ENCODE measurements at regions of chr12 and their contacts with region 1.

Region 1: GRCh38 chr12:12356886-12357718 is at the start of gene BORCS5:
- DNase-seq: peak; percentile 99
- H3K4me3 Mint-ChIP-seq: peak within 1 kb of the TSS; percentile 87
- H3K27ac Mint-ChIP-seq: peak within 1 kb of the TSS; percentile 93
- H3K4me1 Mint-ChIP-seq: peaks cover 51% of the 10 kb centered on the region
- H3K27me3 Mint-ChIP-seq: no peaks in the 10 kb centered on the region
- total RNA-seq, gene BORCS5: 30.9 to 32.4 TPM

Region 2: GRCh38 chr12:11648831-11649702 is 708.0 kb before region 1 on chr12 and contains the start of gene ETV6:
- CTCF ChIA-PET with region 1: interaction called, 3 read pairs
- POLR2A ChIA-PET with region 1: interaction called, 18 read pairs
- DNase-seq: peak; percentile 77
- H3K4me3 Mint-ChIP-seq: peak within 1 kb of the TSS; percentile 95
- H3K27ac Mint-ChIP-seq: peak within 1 kb of the TSS; percentile 96
- H3K4me1 Mint-ChIP-seq: peaks cover 28% of the 10 kb centered on the region
- H3K27me3 Mint-ChIP-seq: no peaks in the 10 kb centered on the region
- total RNA-seq, gene ETV6: 53.7 to 54.9 TPM

Region 3: DNA sequence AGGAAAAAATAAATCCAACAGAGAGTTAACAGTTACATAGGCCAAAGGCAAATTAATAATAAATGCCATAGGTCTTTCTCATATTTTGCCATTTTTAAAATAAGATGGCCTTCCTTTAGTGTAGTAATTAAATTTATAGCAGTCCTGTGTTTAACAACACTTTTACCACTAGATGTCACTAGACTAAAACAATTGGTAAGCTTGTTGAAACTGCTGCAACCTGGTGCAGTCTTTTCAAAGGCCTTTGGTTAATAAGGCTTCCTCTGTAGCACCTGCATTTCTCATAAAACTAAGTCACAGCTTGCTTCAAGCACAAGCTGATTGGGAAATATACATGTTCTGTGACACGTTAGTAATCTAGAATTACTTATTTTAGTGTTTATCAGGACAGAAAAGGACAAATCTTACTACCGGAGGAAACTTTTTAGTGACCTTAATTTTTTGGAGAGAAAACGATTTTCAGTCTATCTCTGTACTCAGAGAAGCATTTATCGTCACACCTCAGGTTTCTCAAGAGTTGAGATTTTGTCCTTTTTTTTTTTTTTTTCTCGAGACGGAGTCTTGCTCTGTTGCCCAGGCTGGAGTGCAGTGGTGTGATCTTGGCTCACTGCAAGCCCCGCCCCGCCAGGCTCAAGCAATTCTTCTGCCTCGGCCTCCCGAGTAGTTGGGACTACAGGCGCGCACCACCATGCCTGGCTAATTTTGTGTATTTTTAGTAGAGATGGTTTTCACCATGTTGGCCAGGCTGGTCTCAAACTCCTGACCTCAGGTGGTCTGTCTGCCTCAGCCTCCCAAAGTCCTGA is 19.7 kb after region 1 on chr12:
- CTCF ChIA-PET with region 1: interaction called, 31 read pairs
- POLR2A ChIA-PET with region 1: interaction called, 68 read pairs
- DNase-seq: no peak
- H3K4me3 Mint-ChIP-seq: no peak overlapping the region
- H3K27ac Mint-ChIP-seq: peak overlapping the region; percentile 65
- H3K4me1 Mint-ChIP-seq: peaks cover 60% of the 10 kb centered on the region
- H3K27me3 Mint-ChIP-seq: no peaks in the 10 kb centered on the region

Region 4: GRCh38 chr12:12456637-12457036 is 99.5 kb after region 1 on chr12:
- CTCF ChIA-PET with region 1: no interaction called
- POLR2A ChIA-PET with region 1: interaction called, 14 read pairs
- DNase-seq: no peak
- H3K4me3 Mint-ChIP-seq: peak overlapping the region; percentile 46
- H3K27ac Mint-ChIP-seq: peak overlapping the region; percentile 84
- H3K4me1 Mint-ChIP-seq: peaks cover 61% of the 10 kb centered on the region
- H3K27me3 Mint-ChIP-seq: no peaks in the 10 kb centered on the region

Region 5: DNA sequence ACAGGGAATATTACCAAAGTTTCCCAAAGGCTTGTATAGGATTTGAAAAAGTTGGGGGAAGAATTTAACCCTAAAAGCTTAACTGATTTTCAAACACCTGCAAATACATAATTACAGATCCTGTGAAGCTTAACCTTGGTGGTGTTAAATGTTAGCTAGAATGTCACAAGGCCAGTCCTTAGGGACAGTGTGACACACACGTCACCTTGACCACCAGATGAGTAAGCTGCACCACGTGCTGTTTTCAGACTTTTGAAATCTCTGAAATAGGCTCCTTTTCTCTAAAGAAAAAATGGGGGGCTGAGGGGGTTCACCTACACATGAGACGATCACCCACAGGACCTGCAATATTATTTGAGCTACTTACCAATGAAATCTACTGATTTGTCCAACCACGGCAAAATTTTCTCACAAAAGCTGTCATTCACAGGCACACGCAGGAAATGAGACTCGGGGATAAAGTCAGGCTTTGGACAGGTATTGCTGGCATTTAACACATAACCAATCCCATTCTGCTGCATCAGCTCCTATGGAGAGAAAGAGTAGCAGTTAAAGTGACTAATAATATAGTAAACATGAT is 129.6 kb after region 1 on chr12:
- CTCF ChIA-PET with region 1: no interaction called
- POLR2A ChIA-PET with region 1: interaction called, 54 read pairs
- DNase-seq: no peak
- H3K4me3 Mint-ChIP-seq: no peak overlapping the region
- H3K27ac Mint-ChIP-seq: peak overlapping the region; percentile 77
- H3K4me1 Mint-ChIP-seq: peaks cover 66% of the 10 kb centered on the region
- H3K27me3 Mint-ChIP-seq: no peaks in the 10 kb centered on the region

Region 6: DNA sequence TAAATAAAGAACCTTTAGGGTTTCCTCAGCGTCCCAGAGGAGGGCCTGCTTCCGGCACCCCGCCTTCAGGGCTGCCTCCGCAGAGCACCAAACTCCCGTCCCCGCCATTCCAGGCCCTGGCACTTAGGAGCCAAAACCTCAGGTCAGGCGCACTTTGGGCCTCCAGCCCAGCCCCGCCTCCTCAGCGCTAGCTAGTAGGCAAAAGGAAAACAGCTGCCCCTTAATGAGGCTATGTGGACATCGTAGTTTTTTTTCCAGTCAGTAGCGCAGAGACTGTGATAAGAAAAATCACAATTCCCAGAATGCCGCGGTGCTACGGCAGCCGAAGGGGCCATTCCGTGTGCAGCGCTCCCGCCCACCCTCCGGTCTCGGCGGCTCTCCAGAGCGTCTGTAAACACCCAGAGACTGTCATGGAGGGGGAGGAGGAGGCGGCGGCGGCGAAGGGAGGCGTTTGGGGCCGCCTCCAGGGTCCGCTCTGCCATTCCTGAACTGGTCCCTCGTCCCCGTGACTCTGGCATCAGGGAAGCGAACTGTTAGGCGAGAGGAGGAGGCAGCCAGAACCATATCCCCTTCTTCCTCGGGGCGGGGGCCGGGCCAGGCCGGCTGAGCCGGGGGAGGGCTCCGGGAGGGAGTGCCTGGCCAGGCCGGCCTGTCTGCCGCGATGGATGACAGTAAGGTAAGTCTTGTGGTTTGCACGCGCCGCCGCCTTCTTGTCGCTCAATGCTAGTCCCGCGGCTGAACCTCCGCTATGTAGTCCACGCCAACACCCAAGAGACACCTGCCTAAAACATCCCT is 254.6 kb after region 1 on chr12 and contains the start of gene CREBL2:
- CTCF ChIA-PET with region 1: interaction called, 4 read pairs
- POLR2A ChIA-PET with region 1: interaction called, 23 read pairs
- DNase-seq: peak; percentile 86
- H3K4me3 Mint-ChIP-seq: peak within 1 kb of the TSS; percentile 89
- H3K27ac Mint-ChIP-seq: peak within 1 kb of the TSS; percentile 95
- H3K4me1 Mint-ChIP-seq: peaks cover 64% of the 10 kb centered on the region
- H3K27me3 Mint-ChIP-seq: no peaks in the 10 kb centered on the region
- total RNA-seq, gene CREBL2: 24.2 to 26.1 TPM

Region 7: GRCh38 chr12:12736759-12737676 is 379.9 kb after region 1 on chr12:
- CTCF ChIA-PET with region 1: interaction called, 26 read pairs
- POLR2A ChIA-PET with region 1: interaction called, 79 read pairs
- DNase-seq: peak; percentile 77
- H3K4me3 Mint-ChIP-seq: peak overlapping the region; percentile 68
- H3K27ac Mint-ChIP-seq: peak overlapping the region; percentile 94
- H3K4me1 Mint-ChIP-seq: peaks cover 67% of the 10 kb centered on the region
- H3K27me3 Mint-ChIP-seq: no peaks in the 10 kb centered on the region

Measured in activated CD4-positive, alpha-beta memory T cell treated with anti-CD3 and anti-CD28 coated beads, Interleukin-2, amount 10 ng/mL, durations not matched to agents 7 days and 5 days (primary cell).